ENCODE measurements at regions of chr22 and their contacts with region 1.

Region 1: GRCh38 chr22:26364066-26365015 is 64.7 kb upstream of the ASPHD2 start:
- DNase-seq: peak; percentile 60
- CTCF ChIP-seq: peak; percentile 86

Region 2: GRCh38 chr22:26461188-26461810 is 97.0 kb after region 1 on chr22:
- in situ Hi-C with region 1: loop called (anchors 10 kb)
- DNase-seq: peak; percentile 53
- CTCF ChIP-seq: peak; percentile 69